ENCODE measurements at regions of chr2 and their contacts with region 1.

Region 1: DNA sequence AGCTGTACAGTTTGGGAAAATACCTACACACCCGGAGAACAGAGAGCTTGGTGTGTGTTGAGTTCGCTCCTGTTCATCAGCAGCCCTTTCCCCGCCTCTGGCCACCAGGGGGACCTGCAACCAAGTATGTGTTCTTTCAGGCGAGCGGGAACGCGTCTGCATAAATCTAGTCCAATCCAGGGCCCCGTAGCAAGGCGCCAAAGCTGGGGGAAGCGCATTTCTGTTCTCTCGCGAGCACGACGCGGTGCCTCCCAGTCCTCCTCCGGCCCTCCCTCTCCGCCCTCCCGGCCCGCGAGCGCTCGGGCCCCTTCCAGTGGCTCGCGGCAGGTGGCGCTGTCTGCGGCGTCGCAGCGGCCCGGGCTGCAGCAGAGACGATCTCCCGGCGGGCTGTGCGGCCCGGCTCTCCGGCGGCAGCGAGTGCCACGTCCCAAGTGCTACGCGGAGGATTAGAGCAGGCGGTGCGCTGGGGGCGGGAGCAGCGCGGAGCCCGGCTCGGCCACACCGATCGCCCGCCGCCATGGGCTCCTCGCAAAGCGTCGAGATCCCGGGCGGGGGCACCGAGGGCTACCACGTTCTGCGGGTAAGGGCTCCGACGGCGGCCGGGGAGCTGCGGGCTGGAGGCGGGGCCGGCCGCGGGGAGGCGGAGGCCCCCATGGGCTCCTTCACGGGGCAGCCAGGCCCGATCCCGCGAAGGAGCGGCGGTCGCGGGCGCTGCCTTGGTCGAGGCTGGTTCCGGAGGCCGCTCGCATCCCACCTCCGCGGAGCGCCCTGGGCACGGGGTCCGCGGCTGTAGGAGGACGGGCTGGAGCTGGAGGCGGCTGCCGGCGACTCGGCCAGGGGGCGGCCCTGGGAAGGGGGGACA is at the start of gene GORASP2:
- DNase-seq: peak; percentile 99
- H3K4me3 ChIP-seq: peak within 1 kb of the TSS; percentile 77 to 94 (median 84)
- H3K27ac ChIP-seq: peak within 1 kb of the TSS; percentile 93 to 97 (median 96)
- H3K4me1 ChIP-seq: peaks cover 0 to 45% (median 32%) of the 10 kb centered on the region in 4 donors
- H3K27me3 ChIP-seq: no peaks in the 10 kb centered on the region
- CTCF ChIP-seq: peak; percentile 89 to 94 (median 92)
- EP300 ChIP-seq: peak in 1 of 4 donors; percentile 66
- POLR2A ChIP-seq: peak; percentile 46 to 51
- total RNA-seq, gene GORASP2: 32.4 to 51.4 (median 41.8) TPM

Region 2: GRCh38 chr2:170770606-170771420 is 158.2 kb before region 1 on chr2:
- intact Hi-C with region 1: loop called (anchors 2 kb)
- DNase-seq: peak; percentile 88
- H3K4me3 ChIP-seq: peak overlapping the region; percentile 69 to 74 (median 71)
- H3K27ac ChIP-seq: peak overlapping the region; percentile 74 to 84 (median 79)
- H3K4me1 ChIP-seq: peaks cover 0 to 17% (median 8%) of the 10 kb centered on the region in 4 donors
- H3K27me3 ChIP-seq: no peaks in the 10 kb centered on the region
- CTCF ChIP-seq: no peak
- EP300 ChIP-seq: no peak
- POLR2A ChIP-seq: no peak

Region 3: GRCh38 chr2:170973492-170974303 is 44.6 kb after region 1 on chr2:
- intact Hi-C with region 1: loop called (anchors 5 kb)
- DNase-seq: peak; percentile 92
- H3K4me3 ChIP-seq: peak overlapping the region; percentile 61 to 86 (median 74)
- H3K27ac ChIP-seq: peak overlapping the region; percentile 80 to 89 (median 86)
- H3K4me1 ChIP-seq: peaks cover 0 to 18% (median 17%) of the 10 kb centered on the region in 4 donors
- H3K27me3 ChIP-seq: no peaks in the 10 kb centered on the region
- CTCF ChIP-seq: peak in 3 of 4 experiments; percentile 50 to 96 (median 59)
- EP300 ChIP-seq: no peak
- POLR2A ChIP-seq: no peak

Region 4: DNA sequence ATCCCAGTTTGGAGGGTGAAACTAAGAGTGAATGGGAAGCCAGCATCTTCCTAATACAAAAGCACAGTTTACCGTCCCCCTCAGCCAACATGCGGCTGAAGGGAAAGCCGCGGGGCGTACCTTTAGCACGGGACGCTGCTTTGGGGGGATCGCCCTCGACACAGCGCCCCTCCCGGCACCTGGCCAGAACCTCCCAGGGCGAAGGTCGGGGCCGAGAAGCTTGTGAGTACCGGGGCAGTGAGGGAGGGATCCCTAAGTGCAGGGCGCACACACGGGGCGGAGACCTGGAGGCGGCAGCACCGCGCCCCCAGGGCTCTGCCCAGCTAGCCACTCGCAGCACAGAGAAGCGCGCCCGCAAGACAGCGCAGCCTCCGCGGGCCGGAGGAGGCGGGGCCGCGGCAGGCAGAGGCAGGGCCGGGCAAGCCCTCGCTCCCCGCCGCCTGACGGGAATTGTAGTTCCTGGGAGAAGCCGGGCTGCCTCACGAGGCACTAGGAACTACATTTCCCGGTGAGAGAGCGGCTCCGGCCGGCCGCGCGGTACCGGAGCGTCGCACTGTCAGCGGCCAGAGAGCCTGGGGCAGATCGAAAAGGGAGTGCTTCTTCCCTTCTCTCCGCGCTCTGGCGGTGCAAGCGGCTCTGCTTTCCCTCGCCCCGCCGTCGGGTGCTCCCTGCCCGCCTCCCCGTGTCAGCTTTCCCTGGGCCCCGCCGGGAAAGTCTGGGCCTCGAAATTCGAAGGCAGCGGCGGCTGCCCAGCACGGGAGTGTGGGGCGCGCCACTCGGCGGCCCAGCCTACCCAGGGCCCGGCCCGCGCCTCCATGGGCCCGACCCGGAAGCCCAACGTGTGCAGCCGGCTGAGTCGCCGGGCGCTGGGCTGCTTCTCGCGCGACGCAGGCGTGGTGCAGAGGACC is 505.0 kb after region 1 on chr2 and contains the starts of genes DCAF17 and METTL8:
- intact Hi-C with region 1: loop called (anchors 1 kb)
- DNase-seq: peak; percentile 97
- H3K4me3 ChIP-seq: peak within 1 kb of the TSS; percentile 60 to 88 (median 78)
- H3K27ac ChIP-seq: peak within 1 kb of the TSS; percentile 88 to 99 (median 97)
- H3K4me1 ChIP-seq: peaks cover 0 to 46% (median 33%) of the 10 kb centered on the region in 4 donors
- H3K27me3 ChIP-seq: no peaks in the 10 kb centered on the region
- CTCF ChIP-seq: peak in 1 of 4 experiments; percentile 11
- EP300 ChIP-seq: no peak
- POLR2A ChIP-seq: peak in 1 of 2 donors; percentile 59
- total RNA-seq, gene DCAF17: 19.1 to 27.5 (median 21.9) TPM
- total RNA-seq, gene METTL8: 30.1 to 42.7 (median 40.2) TPM

Region 5: GRCh38 chr2:171522052-171522787 is 593.2 kb after region 1 on chr2 and contains the start of gene CYBRD1:
- intact Hi-C with region 1: loop called (anchors 5 kb)
- DNase-seq: peak; percentile 96
- H3K4me3 ChIP-seq: peak within 1 kb of the TSS; percentile 83 to 99 (median 93)
- H3K27ac ChIP-seq: peak within 1 kb of the TSS; percentile 93 to 98 (median 95)
- H3K4me1 ChIP-seq: peaks cover 0 to 26% (median 21%) of the 10 kb centered on the region in 4 donors
- H3K27me3 ChIP-seq: no peaks in the 10 kb centered on the region
- CTCF ChIP-seq: no peak
- EP300 ChIP-seq: peak in 1 of 4 donors; percentile 56
- POLR2A ChIP-seq: peak; percentile 58 to 72
- total RNA-seq, gene CYBRD1: 119 to 250 (median 197) TPM

Region 6: GRCh38 chr2:171687287-171688128 is 758.5 kb after region 1 on chr2 and contains the start of gene DYNC1I2:
- intact Hi-C with region 1: loop called (anchors 10 kb)
- DNase-seq: peak; percentile 96
- H3K4me3 ChIP-seq: peak within 1 kb of the TSS; percentile 55 to 91 (median 75)
- H3K27ac ChIP-seq: peak within 1 kb of the TSS; percentile 81 to 88 (median 85)
- H3K4me1 ChIP-seq: peaks cover 0 to 19% (median 16%) of the 10 kb centered on the region in 4 donors
- H3K27me3 ChIP-seq: no peaks in the 10 kb centered on the region
- CTCF ChIP-seq: peak in 1 of 4 experiments; percentile 16
- EP300 ChIP-seq: no peak
- POLR2A ChIP-seq: peak in 1 of 2 donors; percentile 31
- total RNA-seq, gene DYNC1I2: 103 to 133 (median 127) TPM

Region 7: DNA sequence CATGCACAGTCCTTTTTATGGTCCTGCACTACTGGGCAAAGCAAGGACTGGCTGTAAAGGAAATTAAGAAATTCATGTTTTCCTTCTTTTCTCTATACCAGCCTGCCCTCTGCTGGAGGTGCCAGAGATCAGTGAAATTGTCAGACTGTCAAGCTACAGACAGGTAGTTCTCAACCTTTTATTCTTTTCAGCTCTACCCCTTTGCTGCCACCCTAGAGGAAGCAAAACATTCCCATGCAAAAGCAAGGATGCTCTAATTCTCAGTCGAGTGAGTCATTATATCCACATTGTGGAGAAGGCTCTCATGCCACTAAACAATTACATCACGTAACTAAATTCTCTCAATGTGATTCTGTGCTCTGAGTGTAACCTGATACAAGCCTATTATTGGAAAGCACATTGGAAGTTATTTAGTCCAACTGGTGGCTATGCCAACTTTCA is 1781.5 kb after region 1 on chr2:
- intact Hi-C with region 1: no loop called
- DNase-seq: no peak
- H3K4me3 ChIP-seq: no peak overlapping the region
- H3K27ac ChIP-seq: no peak overlapping the region
- H3K4me1 ChIP-seq: no peaks in the 10 kb centered on the region
- H3K27me3 ChIP-seq: no peaks in the 10 kb centered on the region
- CTCF ChIP-seq: peak in 3 of 4 experiments; percentile 64 to 68 (median 64)
- EP300 ChIP-seq: no peak
- POLR2A ChIP-seq: no peak

Measured in sigmoid colon (tissue), 7 donors.